Heart left ventricle (tissue), 16 donors: ENCODE measurements at regions of chr2 and their contacts with region 1.

Region 1: DNA sequence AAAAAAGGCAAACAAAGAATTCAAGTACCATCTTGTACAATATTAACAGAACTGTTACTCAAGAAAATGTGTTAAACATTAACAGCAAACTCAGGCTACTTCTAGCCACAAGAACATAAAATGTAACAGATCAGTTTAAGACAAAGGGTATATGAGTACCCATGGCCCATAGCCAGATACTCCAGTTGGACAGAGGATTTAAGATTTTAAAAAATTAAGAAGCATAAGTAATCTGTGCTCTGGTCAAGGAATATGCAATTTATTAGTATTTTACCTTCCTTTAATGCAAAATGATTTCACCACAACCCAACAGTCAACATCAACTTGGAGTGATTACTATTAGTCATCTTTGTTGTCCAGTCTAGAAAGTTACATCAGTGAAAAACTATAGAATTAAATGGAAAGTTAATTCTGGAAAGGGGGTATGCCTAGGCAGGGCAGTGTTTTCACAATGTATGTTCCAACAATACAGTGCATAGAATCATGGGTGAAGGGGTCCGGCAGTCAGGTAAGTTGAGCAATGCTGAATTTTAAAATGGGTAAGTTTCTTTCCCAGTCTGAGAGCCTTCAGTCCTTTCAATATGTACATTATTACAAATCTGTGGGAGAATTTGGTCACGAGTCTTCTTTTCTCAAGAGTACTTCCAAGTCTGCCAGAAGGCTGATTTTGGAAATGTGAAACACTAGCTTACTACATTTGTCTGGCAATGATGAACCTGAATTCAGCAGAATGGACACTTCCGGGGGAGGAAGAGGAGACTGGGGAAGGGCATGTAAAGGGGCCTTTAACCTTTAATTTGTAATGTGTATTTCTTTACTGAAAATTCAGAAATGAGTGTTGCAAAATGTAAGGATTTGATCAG is 34.5 kb downstream of the SFT2D3 start:
- DNase-seq: no peak
- ATAC-seq: no peak
- H3K4me3 ChIP-seq: no peak overlapping the region
- H3K27ac ChIP-seq: peak overlapping the region in 1 of 12 donors; percentile 79
- H3K4me1 ChIP-seq: peaks cover 0 to 23% (median 12%) of the 10 kb centered on the region in 12 donors
- H3K27me3 ChIP-seq: no peaks in the 10 kb centered on the region
- CTCF ChIP-seq: no peak
- POLR2A ChIP-seq: no peak

Region 2: GRCh38 chr2:127776122-127776780 is 40.5 kb after region 1 on chr2:
- intact Hi-C with region 1: loop called in 1 of 10 experiments (anchors 5 kb)
- DNase-seq: no peak
- ATAC-seq: peak; percentile 34 to 41 (median 39)
- H3K4me3 ChIP-seq: no peak overlapping the region
- H3K27ac ChIP-seq: peak overlapping the region in 1 of 12 donors; percentile 33
- H3K4me1 ChIP-seq: peaks cover 0 to 28% (median 14%) of the 10 kb centered on the region in 12 donors
- H3K27me3 ChIP-seq: no peaks in the 10 kb centered on the region
- CTCF ChIP-seq: no peak
- POLR2A ChIP-seq: no peak